Activated CD4-positive, alpha-beta T cell treated with anti-CD3 and anti-CD28 coated beads for 36 hours (primary cell): ENCODE measurements at regions of chr10 and their contacts with region 1.

Region 1: GRCh38 chr10:91694170-91694794 is 61.4 kb upstream of the PPP1R3C start:
- DNase-seq: peak; percentile 31
- ATAC-seq: no peak
- H3K4me3 Mint-ChIP-seq: no peak overlapping the region
- H3K27ac Mint-ChIP-seq: no peak overlapping the region
- H3K4me1 Mint-ChIP-seq: peaks cover 4% of the 10 kb centered on the region
- H3K27me3 Mint-ChIP-seq: peaks cover 4% of the 10 kb centered on the region

Region 2: GRCh38 chr10:91551856-91552255 is 142.4 kb before region 1 on chr10:
- CTCF ChIA-PET with region 1: interaction called, 3 read pairs
- POLR2A ChIA-PET with region 1: no interaction called
- intact Hi-C with region 1: loop called in 1 of 2 experiments (anchors 5 kb)
- DNase-seq: peak; percentile 36
- ATAC-seq: no peak
- H3K4me3 Mint-ChIP-seq: no peak overlapping the region
- H3K27ac Mint-ChIP-seq: no peak overlapping the region
- H3K4me1 Mint-ChIP-seq: no peaks in the 10 kb centered on the region
- H3K27me3 Mint-ChIP-seq: peaks cover 6% of the 10 kb centered on the region

Region 3: GRCh38 chr10:91613411-91614253 is 80.7 kb before region 1 on chr10:
- CTCF ChIA-PET with region 1: no interaction called
- POLR2A ChIA-PET with region 1: no interaction called
- intact Hi-C with region 1: no loop called
- DNase-seq: no peak
- ATAC-seq: no peak
- H3K4me3 Mint-ChIP-seq: no peak overlapping the region
- H3K27ac Mint-ChIP-seq: no peak overlapping the region
- H3K4me1 Mint-ChIP-seq: no peaks in the 10 kb centered on the region
- H3K27me3 Mint-ChIP-seq: peaks cover 11% of the 10 kb centered on the region